ENCODE measurements at regions of chr9 and their contacts with region 1.

Region 1: DNA sequence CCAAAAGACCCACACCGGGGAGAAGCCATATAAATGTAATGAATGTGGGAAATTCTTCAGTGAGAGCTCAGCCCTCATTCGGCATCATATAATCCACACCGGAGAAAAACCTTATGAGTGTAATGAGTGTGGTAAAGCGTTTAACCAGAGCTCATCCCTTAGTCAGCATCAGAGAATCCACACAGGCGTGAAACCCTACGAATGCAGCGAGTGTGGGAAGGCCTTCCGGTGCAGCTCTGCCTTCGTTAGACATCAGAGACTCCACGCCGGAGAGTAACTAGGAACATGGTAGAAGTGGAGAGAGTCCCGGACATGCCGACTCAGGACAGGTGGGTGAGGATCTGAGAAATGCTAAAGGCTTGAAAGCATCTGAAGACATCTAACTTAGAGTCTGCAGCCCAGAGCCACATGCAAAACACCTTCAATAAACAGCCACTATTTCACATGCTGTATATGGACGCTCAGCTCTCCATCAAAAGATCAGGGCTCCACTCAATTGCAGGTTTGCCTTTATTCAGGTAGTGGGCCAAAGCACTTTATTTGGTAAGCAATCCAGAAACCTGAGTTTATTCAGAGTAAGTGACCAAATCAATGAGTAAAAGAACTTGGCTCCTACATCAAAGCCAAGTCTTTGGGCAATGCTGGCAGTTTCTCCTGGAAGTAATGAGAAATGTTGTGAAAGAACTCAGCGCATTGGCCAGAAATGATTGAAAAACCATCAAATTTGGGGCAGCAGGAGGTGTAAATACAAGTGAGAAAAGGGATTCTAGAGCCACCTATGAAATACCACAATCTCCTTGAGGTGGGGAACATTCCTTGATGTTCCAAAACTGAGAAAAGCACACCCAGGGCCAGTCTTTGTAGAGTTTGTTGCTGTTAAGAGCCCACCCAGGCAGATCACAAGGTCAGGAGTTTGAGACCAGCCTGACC is 6.0 kb downstream of the RPL12 start:
- DNase-seq: peak; percentile 41
- H3K4me3 ChIP-seq: no peak overlapping the region
- H3K27ac ChIP-seq: no peak overlapping the region
- H3K4me1 ChIP-seq: peaks cover 16% of the 10 kb centered on the region
- H3K27me3 ChIP-seq: no peaks in the 10 kb centered on the region
- CTCF ChIP-seq: no peak

Region 2: DNA sequence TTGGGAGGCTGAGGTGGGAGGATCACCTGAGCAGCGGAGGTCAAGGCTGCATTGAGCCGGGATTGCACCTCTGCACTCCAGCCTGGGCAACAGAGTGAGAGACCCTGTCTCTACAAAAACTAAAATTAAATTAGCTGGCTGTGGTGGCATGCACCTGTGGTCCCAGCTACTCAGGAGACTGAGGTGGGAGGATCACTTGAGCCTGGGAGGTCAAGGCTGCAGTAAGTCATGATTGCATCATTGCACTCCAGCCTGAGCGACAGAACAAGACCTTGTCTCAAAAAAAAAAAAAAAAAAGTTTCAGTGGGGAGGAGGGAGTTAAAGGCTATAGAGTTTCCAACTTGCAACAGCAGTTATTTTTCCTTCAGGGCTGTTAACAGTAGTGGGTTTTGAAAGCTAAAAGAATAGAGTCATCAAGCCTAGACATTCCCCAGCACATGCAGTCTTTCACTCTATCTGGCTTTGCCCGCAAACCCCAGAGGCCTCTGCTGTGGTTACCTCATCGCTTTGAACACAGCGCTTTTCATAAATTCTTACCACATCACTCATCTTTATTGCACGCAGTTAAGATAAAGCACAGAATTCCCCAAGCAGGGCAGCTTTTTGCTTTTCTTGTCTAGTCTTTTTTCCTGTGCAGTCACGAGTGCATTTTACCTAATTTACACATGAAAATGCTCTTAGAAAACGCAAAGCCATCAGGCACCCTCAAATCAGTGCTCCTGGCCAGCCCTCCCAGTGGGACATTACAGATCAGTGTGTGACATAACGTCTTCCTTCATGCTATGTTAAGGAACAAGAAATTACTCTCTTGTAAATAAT is 56.9 kb before region 1 on chr9:
- CTCF ChIA-PET with region 1: no interaction called
- dilution Hi-C with region 1: no loop called
- in situ Hi-C with region 1: loop called in 1 of 2 experiments (anchors 10 kb)
- intact Hi-C with region 1: no loop called
- DNase-seq: peak; percentile 96
- H3K4me3 ChIP-seq: no peak overlapping the region
- H3K27ac ChIP-seq: no peak overlapping the region
- H3K4me1 ChIP-seq: peaks cover 16% of the 10 kb centered on the region
- H3K27me3 ChIP-seq: peaks cover 8% of the 10 kb centered on the region
- CTCF ChIP-seq: no peak

Region 3: GRCh38 chr9:127463911-127464310 is 18.7 kb after region 1 on chr9:
- CTCF ChIA-PET with region 1: no interaction called
- dilution Hi-C with region 1: no loop called
- in situ Hi-C with region 1: no loop called
- intact Hi-C with region 1: no loop called
- DNase-seq: no peak
- H3K4me3 ChIP-seq: no peak overlapping the region
- H3K27ac ChIP-seq: no peak overlapping the region
- H3K4me1 ChIP-seq: no peaks in the 10 kb centered on the region
- H3K27me3 ChIP-seq: no peaks in the 10 kb centered on the region
- CTCF ChIP-seq: no peak

Region 4: GRCh38 chr9:127479507-127480081 is 34.4 kb after region 1 on chr9:
- CTCF ChIA-PET with region 1: no interaction called
- dilution Hi-C with region 1: loop called (anchors 5 kb)
- in situ Hi-C with region 1: no loop called
- intact Hi-C with region 1: no loop called
- DNase-seq: no peak
- H3K4me3 ChIP-seq: no peak overlapping the region
- H3K27ac ChIP-seq: no peak overlapping the region
- H3K4me1 ChIP-seq: no peaks in the 10 kb centered on the region
- H3K27me3 ChIP-seq: no peaks in the 10 kb centered on the region
- CTCF ChIP-seq: no peak

Measured in mammary epithelial cell (primary cell).